B cell (primary cell): ENCODE measurements at regions of chr6 and their contacts with region 1.

Region 1: DNA sequence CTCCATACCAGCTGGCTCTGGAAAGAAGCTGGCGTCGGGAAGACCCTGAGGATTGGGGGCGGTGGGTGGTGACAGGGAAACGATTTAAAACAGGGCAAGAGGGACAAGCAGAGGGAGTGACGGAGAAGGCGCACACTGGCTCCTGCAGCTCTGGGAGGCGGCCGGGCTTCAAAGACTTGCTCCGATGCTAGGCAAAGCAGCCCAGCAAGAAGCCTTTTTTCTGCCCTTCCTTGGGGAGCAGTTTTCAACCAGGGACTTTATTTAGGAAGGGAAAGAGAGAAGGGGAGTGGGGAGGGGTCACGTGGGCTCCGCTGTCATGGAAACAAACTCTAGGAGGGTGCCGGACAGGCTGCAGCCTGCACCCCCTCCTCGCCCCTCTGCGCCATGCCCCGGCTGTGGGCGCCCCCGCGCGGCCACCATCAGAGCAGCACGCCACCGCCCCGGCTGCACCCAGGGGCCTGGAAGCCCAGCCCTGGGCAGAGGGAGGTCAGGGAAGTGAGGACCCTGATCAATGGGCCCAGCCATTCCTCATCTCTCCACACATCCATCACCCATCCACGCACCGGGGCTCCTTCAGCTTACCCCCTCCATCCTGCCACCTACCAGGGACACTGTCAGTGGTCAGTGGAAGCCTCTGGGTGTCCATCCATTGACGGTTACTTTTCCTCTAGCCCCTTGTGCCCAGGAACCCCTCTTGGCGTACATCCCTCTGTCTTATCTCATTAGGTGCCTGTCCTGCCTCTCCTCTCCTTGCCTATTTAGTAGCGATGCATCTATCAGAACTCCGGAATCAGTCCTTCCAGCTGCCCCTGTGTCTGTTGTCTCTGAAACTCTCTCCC is 66.6 kb upstream of the CCDC167 start:
- DNase-seq: peak; percentile 84
- ATAC-seq: peak; percentile 64
- H3K4me3 ChIP-seq: peak overlapping the region; percentile 17 to 52 (median 44)
- H3K4me3 Mint-ChIP-seq: peak overlapping the region; percentile 70
- H3K27ac ChIP-seq: no peak overlapping the region
- H3K27ac Mint-ChIP-seq: peak overlapping the region; percentile 54
- H3K4me1 ChIP-seq: peaks cover 56 to 67% of the 10 kb centered on the region in 2 donors
- H3K4me1 Mint-ChIP-seq: peaks cover 66% of the 10 kb centered on the region
- H3K27me3 ChIP-seq: no peaks in the 10 kb centered on the region
- H3K27me3 Mint-ChIP-seq: no peaks in the 10 kb centered on the region
- CTCF ChIP-seq: peak; percentile 95

Region 2: GRCh38 chr6:37483917-37484785 is 82.2 kb before region 1 on chr6:
- CTCF ChIA-PET with region 1: interaction called, 47 read pairs
- POLR2A ChIA-PET with region 1: no interaction called
- intact Hi-C with region 1: loop called (anchors 1 kb)
- DNase-seq: peak; percentile 81
- ATAC-seq: peak; percentile 91
- H3K4me3 ChIP-seq: no peak overlapping the region
- H3K4me3 Mint-ChIP-seq: no peak overlapping the region
- H3K27ac ChIP-seq: peak overlapping the region in 1 of 2 donors; percentile 19
- H3K27ac Mint-ChIP-seq: no peak overlapping the region
- H3K4me1 ChIP-seq: peaks cover 0 to 14% of the 10 kb centered on the region in 2 donors
- H3K4me1 Mint-ChIP-seq: peaks cover 9% of the 10 kb centered on the region
- H3K27me3 ChIP-seq: no peaks in the 10 kb centered on the region
- H3K27me3 Mint-ChIP-seq: no peaks in the 10 kb centered on the region
- CTCF ChIP-seq: peak; percentile 86

Region 3: DNA sequence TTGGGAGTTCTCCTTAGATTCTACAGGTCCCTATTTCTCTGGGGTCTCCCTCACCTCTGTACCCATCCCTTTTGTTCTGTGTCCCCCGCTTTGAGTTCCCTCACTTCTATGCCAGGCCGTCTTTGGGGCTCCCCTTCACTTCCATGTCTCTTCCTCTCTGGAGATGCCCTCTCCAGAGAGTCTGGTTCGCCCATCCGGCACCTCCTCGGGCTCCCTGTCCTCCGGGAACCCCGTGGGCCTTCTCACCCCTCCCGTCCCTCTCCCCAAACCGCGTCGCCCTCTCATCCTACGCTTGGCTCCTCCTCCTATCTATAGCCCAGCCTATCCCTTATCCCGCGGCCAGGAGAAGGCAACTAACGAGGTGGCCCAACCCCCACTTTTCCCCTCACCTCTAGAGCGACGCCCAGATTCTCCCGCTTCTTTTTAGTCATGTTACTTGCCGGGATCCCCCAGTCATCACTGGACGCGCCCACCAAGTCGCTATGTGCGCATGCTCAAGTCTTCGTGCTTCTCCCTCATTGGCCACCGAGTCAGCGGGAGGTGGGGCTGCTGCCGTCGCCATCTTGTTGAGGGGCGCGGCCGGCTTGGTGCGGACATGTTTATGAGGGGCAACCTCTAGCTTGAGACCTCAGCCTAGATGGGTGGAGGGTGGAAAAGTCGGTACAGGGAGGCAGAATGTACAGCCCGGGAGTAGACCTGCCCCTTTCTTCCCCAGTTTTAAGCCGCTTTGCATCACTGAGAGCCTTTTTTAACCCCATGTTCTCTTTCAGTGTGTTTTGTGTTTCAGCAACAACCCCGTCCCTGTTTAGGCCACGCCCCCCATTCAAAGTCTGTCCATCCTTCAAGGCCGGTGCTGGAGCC is 66.7 kb before region 1 on chr6 and contains the start of gene CCDC167:
- CTCF ChIA-PET with region 1: interaction called, 17 read pairs
- POLR2A ChIA-PET with region 1: interaction called, 4 read pairs
- intact Hi-C with region 1: loop called (anchors 5 kb)
- DNase-seq: peak; percentile 96
- ATAC-seq: peak; percentile 91
- H3K4me3 ChIP-seq: peak within 1 kb of the TSS; percentile 70 to 100 (median 93)
- H3K4me3 Mint-ChIP-seq: peak within 1 kb of the TSS; percentile 95
- H3K27ac ChIP-seq: peak within 1 kb of the TSS; percentile 69 to 90
- H3K27ac Mint-ChIP-seq: peak within 1 kb of the TSS; percentile 88
- H3K4me1 ChIP-seq: peaks cover 46 to 67% of the 10 kb centered on the region in 2 donors
- H3K4me1 Mint-ChIP-seq: peaks cover 67% of the 10 kb centered on the region
- H3K27me3 ChIP-seq: no peaks in the 10 kb centered on the region
- H3K27me3 Mint-ChIP-seq: no peaks in the 10 kb centered on the region
- CTCF ChIP-seq: no peak
- total RNA-seq, gene CCDC167: 9.7 and 11.1 TPM in 2 replicates

Region 4: GRCh38 chr6:37547564-37548061 is 18.7 kb before region 1 on chr6:
- CTCF ChIA-PET with region 1: interaction called, 15 read pairs
- POLR2A ChIA-PET with region 1: interaction called, 5 read pairs
- intact Hi-C with region 1: loop called (anchors 2 kb)
- DNase-seq: peak; percentile 66
- ATAC-seq: peak; percentile 71
- H3K4me3 ChIP-seq: peak overlapping the region in 1 of 5 experiments; percentile 32
- H3K4me3 Mint-ChIP-seq: peak overlapping the region; percentile 67
- H3K27ac ChIP-seq: peak overlapping the region; percentile 35 to 71
- H3K27ac Mint-ChIP-seq: peak overlapping the region; percentile 82
- H3K4me1 ChIP-seq: peaks cover 83 to 98% of the 10 kb centered on the region in 2 donors
- H3K4me1 Mint-ChIP-seq: peaks cover 73% of the 10 kb centered on the region
- H3K27me3 ChIP-seq: no peaks in the 10 kb centered on the region
- H3K27me3 Mint-ChIP-seq: no peaks in the 10 kb centered on the region
- CTCF ChIP-seq: no peak

Region 5: DNA sequence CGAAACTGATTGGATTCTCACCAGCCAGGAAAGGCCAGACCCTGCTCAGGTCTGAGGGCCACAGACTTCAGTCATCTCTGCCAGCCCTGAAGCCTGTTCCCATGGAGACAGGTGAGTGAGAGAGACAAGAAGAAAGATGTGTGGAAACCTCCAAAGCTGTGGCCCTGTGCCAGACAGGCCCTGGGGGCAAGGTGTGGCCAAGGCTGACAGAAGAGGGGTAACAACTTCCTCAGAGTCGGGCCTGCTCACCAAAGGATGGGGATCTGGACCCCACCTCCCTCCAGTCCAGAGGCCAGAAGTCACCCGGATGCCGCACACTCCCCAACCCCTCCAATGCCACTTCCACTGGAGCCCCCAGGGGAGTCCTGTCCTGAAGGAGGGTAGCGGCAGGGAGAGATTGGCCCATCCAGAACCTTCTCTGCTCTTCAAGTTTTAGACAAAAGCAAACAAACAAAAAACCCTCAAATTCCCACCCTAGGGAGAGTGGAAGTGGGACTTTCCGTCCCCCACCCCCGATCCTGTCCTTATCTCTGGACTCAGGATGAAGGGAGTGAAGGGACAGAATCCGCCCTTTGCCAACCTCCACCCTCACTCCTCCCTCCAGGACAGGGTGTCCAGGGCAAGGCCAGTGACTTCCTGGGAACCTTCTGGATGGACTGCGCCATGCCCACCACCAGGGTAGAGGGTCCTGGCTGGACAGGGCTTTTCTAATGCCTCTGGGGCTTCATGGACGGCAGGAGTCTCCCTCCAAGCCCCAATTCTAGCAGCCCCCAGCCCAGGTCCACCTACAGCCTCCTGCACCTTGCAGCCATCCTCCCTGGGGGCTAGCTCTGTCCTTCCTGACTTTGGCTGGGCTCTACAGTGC is 58.0 kb after region 1 on chr6:
- CTCF ChIA-PET with region 1: no interaction called
- POLR2A ChIA-PET with region 1: no interaction called
- intact Hi-C with region 1: no loop called
- DNase-seq: peak; percentile 21
- ATAC-seq: no peak
- H3K4me3 ChIP-seq: peak overlapping the region in 1 of 5 experiments; percentile 8
- H3K4me3 Mint-ChIP-seq: peak overlapping the region; percentile 59
- H3K27ac ChIP-seq: no peak overlapping the region
- H3K27ac Mint-ChIP-seq: no peak overlapping the region
- H3K4me1 ChIP-seq: peaks cover 63 to 65% of the 10 kb centered on the region in 2 donors
- H3K4me1 Mint-ChIP-seq: peaks cover 63% of the 10 kb centered on the region
- H3K27me3 ChIP-seq: peaks cover 0 to 33% (median 9%) of the 10 kb centered on the region in 4 experiments
- H3K27me3 Mint-ChIP-seq: peaks cover 5% of the 10 kb centered on the region
- CTCF ChIP-seq: no peak

Region 6: GRCh38 chr6:37691904-37692806 is 125.8 kb after region 1 on chr6:
- CTCF ChIA-PET with region 1: interaction called, 49 read pairs
- POLR2A ChIA-PET with region 1: no interaction called
- intact Hi-C with region 1: loop called (anchors 1 kb)
- DNase-seq: peak; percentile 84
- ATAC-seq: peak; percentile 82
- H3K4me3 ChIP-seq: no peak overlapping the region
- H3K4me3 Mint-ChIP-seq: no peak overlapping the region
- H3K27ac ChIP-seq: no peak overlapping the region
- H3K27ac Mint-ChIP-seq: no peak overlapping the region
- H3K4me1 ChIP-seq: peaks cover 21 to 23% of the 10 kb centered on the region in 2 donors
- H3K4me1 Mint-ChIP-seq: peaks cover 26% of the 10 kb centered on the region
- H3K27me3 ChIP-seq: peaks cover 0 to 34% (median 14%) of the 10 kb centered on the region in 4 experiments
- H3K27me3 Mint-ChIP-seq: peaks cover 26% of the 10 kb centered on the region
- CTCF ChIP-seq: peak; percentile 95

Region 7: GRCh38 chr6:37934276-37934675 is 367.9 kb after region 1 on chr6:
- CTCF ChIA-PET with region 1: no interaction called
- POLR2A ChIA-PET with region 1: no interaction called
- intact Hi-C with region 1: no loop called
- DNase-seq: no peak
- ATAC-seq: no peak
- H3K4me3 ChIP-seq: no peak overlapping the region
- H3K4me3 Mint-ChIP-seq: no peak overlapping the region
- H3K27ac ChIP-seq: no peak overlapping the region
- H3K27ac Mint-ChIP-seq: no peak overlapping the region
- H3K4me1 ChIP-seq: peaks cover 0 to 16% of the 10 kb centered on the region in 2 donors
- H3K4me1 Mint-ChIP-seq: peaks cover 33% of the 10 kb centered on the region
- H3K27me3 ChIP-seq: no peaks in the 10 kb centered on the region
- H3K27me3 Mint-ChIP-seq: no peaks in the 10 kb centered on the region
- CTCF ChIP-seq: no peak

Region 8: DNA sequence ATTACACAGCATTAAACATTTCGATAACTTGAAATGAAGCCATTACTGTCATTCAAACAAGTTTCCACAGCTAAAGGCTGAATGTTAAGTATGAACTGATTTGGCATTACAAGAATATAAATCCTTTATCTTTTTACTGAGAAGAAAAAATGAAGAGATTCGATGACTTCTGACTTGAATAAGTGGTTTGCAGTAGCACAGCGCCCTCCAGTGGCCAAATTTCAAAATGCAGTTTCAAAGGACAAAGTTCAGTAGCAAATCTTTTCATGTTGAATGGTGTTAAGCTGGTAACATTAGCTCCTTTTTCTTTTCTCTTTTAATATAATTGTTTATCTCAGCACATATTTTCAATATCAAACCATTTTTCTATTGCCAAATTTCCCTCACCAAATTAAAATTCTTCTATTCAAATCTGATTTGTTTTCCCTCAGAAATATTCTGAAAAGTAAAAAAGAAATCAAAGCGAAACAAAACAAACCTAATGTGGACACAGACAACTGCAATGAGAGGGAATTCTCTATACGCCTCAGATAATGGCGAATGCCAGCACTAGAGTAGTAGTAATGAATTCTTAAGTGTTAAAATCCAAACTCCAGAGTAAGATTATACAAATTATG is 927.7 kb after region 1 on chr6:
- CTCF ChIA-PET with region 1: no interaction called
- POLR2A ChIA-PET with region 1: no interaction called
- intact Hi-C with region 1: loop called (anchors 5 kb)
- DNase-seq: peak; percentile 82
- ATAC-seq: peak; percentile 45
- H3K4me3 ChIP-seq: no peak overlapping the region
- H3K4me3 Mint-ChIP-seq: no peak overlapping the region
- H3K27ac ChIP-seq: no peak overlapping the region
- H3K27ac Mint-ChIP-seq: no peak overlapping the region
- H3K4me1 ChIP-seq: no peaks in the 10 kb centered on the region
- H3K4me1 Mint-ChIP-seq: peaks cover 11% of the 10 kb centered on the region
- H3K27me3 ChIP-seq: no peaks in the 10 kb centered on the region
- H3K27me3 Mint-ChIP-seq: no peaks in the 10 kb centered on the region
- CTCF ChIP-seq: peak; percentile 98